ENCODE measurements at regions of chr21 and their contacts with region 1.

Region 1: DNA sequence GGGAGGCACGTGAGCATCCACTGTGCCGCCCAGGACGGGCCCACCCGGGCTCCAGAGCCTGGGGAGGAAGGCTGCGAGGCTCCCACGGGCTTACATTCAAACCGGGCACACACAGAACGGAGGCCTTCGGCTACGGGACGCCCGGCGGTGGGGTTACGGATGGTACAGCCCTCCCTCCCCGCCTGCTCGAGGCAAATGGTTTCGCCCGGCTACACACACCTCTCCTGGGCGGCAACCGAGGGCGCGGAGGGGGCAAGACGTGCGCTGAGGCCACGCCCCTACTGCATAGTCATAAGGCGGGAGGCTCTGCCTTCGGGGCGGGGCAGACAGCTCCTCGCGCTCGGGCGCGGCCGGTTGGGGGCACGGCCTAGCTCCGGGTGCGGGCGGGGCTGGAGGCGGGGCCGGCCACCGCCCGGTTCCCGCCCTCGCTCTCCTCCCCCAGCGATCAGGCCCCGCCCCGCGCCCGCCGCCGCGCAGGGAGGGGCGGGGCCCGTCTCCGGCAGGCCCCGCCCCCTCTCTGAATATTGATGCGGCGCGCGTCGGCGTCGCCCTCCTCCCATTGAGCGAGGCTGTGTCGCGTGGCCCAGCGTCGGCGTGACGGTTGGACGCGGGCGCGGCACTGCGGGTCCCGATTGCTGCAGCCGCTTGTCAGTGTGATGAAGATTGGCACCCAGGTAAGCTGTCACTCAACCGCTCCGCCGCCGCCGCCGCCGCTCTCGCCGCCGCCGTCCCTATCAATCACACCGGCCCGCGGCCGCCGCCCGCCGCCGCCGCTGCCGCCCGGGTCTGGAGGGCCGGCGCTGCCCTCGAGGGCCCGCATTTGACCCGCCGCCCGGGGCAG is at the start of gene PKNOX1:
- DNase-seq: peak; percentile 99
- H3K4me3 Mint-ChIP-seq: peak within 1 kb of the TSS; percentile 90
- H3K27ac Mint-ChIP-seq: peak within 1 kb of the TSS; percentile 94
- H3K4me1 Mint-ChIP-seq: peaks cover 34% of the 10 kb centered on the region
- H3K27me3 Mint-ChIP-seq: no peaks in the 10 kb centered on the region
- total RNA-seq, gene PKNOX1: 15.1 to 17.6 TPM

Region 2: DNA sequence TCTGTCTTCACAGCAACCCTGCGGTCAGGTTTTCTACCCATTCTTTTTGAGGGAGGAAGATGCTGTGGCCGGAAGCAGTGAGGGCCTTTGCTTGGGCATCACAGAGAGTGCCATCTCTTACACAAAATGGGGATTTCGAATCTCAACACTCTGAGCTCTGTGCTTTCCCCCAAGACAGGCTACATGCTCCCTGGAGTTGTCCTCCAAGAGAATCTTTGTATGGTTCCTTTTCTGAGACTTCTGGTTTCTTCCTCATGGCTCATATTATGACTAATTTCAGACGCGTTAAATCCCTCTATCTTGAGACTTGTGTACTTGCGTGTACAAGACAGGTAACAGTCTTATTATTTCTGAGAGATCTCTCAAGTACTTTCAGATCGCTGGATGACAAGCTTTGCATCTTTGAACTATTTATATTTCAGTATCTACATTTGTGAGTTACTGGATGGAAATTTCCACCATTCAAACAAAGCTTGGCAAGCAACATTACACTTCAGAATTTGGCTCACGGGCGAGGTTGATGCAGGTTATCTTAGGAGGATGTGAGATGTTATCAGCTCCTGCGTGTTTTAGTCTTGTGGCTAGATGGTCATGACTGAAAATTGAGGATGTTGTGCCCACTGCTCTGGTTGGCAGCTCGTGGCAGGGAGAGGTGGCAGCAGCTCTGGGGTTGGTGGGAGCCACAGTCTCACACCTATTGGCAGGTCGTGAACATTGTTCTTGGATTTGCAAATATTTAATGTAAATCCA is 735.9 kb before region 1 on chr21:
- CTCF ChIA-PET with region 1: no interaction called
- intact Hi-C with region 1: loop called (anchors 2 kb)
- DNase-seq: peak; percentile 66
- H3K4me3 Mint-ChIP-seq: peak overlapping the region; percentile 13
- H3K27ac Mint-ChIP-seq: peak overlapping the region; percentile 95
- H3K4me1 Mint-ChIP-seq: peaks cover 53% of the 10 kb centered on the region
- H3K27me3 Mint-ChIP-seq: no peaks in the 10 kb centered on the region

Region 3: DNA sequence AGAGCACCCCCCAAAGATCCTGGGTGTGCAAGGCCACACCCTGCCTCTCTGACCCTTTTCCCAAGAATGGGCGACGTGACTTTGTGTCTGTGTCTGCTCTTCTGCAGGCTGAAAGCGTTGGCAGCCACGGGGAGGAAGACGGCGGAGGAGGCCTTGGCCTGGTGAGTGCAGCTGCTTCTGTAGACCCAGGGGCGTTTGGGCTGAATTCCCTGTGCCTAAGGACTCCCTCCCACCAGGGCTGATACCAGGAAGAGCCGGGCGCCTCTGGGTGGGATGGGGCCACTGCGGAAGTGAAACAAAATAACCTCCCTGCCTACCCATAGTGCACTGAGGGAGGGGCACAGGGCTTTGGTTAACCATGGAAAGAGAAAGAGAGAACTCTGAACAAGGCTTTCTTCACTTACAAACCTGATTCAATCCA is 568.0 kb before region 1 on chr21:
- CTCF ChIA-PET with region 1: no interaction called
- intact Hi-C with region 1: loop called (anchors 5 kb)
- DNase-seq: peak; percentile 84
- H3K4me3 Mint-ChIP-seq: peak overlapping the region; percentile 97
- H3K27ac Mint-ChIP-seq: peak overlapping the region; percentile 98
- H3K4me1 Mint-ChIP-seq: peaks cover 56% of the 10 kb centered on the region
- H3K27me3 Mint-ChIP-seq: no peaks in the 10 kb centered on the region

Region 4: GRCh38 chr21:42878993-42879787 is 95.0 kb before region 1 on chr21 and contains the start of gene WDR4:
- CTCF ChIA-PET with region 1: no interaction called
- intact Hi-C with region 1: loop called (anchors 1 kb)
- DNase-seq: peak; percentile 99
- H3K4me3 Mint-ChIP-seq: peak within 1 kb of the TSS; percentile 97
- H3K27ac Mint-ChIP-seq: peak within 1 kb of the TSS; percentile 88
- H3K4me1 Mint-ChIP-seq: peaks cover 20% of the 10 kb centered on the region
- H3K27me3 Mint-ChIP-seq: no peaks in the 10 kb centered on the region
- total RNA-seq, gene WDR4: 38.6 to 38.7 TPM

Region 5: GRCh38 chr21:42892931-42893755 is 81.1 kb before region 1 on chr21 and contains the start of gene NDUFV3:
- CTCF ChIA-PET with region 1: no interaction called
- intact Hi-C with region 1: loop called (anchors 1 kb)
- DNase-seq: peak; percentile 100
- H3K4me3 Mint-ChIP-seq: peak within 1 kb of the TSS; percentile 85
- H3K27ac Mint-ChIP-seq: peak within 1 kb of the TSS; percentile 81
- H3K4me1 Mint-ChIP-seq: peaks cover 15% of the 10 kb centered on the region
- H3K27me3 Mint-ChIP-seq: no peaks in the 10 kb centered on the region
- total RNA-seq, gene NDUFV3: 11.5 to 12.5 TPM

Region 6: GRCh38 chr21:42986125-42986783 is 12.0 kb after region 1 on chr21:
- CTCF ChIA-PET with region 1: no interaction called
- intact Hi-C with region 1: no loop called
- DNase-seq: no peak
- H3K4me3 Mint-ChIP-seq: no peak overlapping the region
- H3K27ac Mint-ChIP-seq: no peak overlapping the region
- H3K4me1 Mint-ChIP-seq: peaks cover 24% of the 10 kb centered on the region
- H3K27me3 Mint-ChIP-seq: no peaks in the 10 kb centered on the region

Region 7: DNA sequence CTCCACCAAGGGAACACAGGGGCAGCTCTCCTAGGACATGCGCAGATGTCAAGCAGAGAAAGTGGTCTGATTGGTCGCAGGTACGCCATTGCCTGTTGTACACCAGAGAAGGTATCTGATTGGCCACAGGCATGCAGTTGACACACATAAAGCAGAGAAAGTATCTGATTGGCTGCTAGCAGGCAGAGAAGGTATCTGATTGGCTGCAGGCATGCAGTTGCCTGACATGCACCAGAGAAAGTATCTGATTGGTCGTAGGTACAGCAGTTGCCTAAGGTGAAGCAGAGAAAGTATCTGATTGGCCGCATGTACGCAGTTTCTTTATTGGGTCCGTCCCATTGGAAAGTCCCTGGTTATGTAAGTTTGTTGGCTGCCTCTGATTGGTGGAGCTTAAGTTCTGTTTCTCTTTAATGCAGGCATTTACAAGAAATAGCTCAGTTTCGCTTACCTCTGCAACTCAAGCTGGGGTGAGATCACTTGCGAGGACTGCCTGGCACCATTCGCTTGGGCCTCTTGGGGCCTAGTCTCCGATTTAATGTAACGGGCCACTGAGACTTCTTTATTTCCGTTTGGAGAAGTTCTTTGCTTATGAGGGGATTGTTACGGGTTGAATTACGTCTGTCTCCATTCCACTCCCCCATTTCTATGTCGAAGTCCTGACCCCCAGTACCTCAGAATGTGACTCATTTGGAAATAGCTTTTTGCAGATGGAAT is 378.5 kb after region 1 on chr21:
- CTCF ChIA-PET with region 1: no interaction called
- intact Hi-C with region 1: no loop called
- DNase-seq: peak; percentile 37
- H3K4me3 Mint-ChIP-seq: no peak overlapping the region
- H3K27ac Mint-ChIP-seq: peak overlapping the region; percentile 76
- H3K4me1 Mint-ChIP-seq: peaks cover 8% of the 10 kb centered on the region
- H3K27me3 Mint-ChIP-seq: no peaks in the 10 kb centered on the region

Region 8: DNA sequence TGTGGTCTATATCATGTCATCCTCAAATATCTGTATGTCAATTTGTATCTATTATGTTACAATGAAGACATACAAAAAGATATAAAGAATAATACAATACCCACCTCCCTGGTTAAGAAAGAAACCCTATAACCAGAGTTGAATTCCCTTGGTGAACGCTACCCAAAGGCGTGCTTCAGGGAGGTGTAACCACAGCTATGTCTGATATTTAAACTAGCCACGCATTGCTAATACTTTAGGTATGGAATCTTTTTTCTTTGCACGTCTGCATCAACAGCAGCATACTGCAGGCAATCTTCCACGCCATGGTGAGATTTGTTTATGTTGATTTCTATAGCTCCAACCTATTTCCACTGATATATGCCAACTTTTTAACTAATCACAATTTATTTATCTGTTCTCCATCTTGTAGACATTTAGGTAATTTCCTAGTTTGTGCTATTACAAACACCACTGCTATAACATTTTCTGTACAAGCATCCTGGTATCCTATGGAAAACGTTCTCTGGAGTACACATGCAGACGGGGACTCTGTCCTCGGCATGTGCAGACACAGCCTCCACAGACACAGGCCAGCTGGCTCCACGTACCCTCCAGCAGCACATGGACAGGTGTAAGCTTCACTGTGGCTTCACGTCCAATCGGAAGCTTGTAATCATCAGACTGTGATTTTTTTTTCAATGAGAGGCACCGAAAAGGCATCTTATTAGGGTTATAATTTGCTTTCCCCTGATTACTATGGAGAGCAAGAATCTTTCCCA is 626.6 kb after region 1 on chr21:
- CTCF ChIA-PET with region 1: no interaction called
- intact Hi-C with region 1: no loop called
- DNase-seq: no peak
- H3K4me3 Mint-ChIP-seq: no peak overlapping the region
- H3K27ac Mint-ChIP-seq: no peak overlapping the region
- H3K4me1 Mint-ChIP-seq: peaks cover 9% of the 10 kb centered on the region
- H3K27me3 Mint-ChIP-seq: no peaks in the 10 kb centered on the region

Measured in activated naive CD4-positive, alpha-beta T cell treated with anti-CD3 and anti-CD28 coated beads for 36 hours (primary cell).